A549 (cell line): ENCODE measurements at regions of chr1 and their contacts with region 1.

Region 1: GRCh38 chr1:75203415-75204277 is 69.5 kb downstream of the LHX8 start:
- DNase-seq: peak; percentile 18 to 61
- ATAC-seq: peak; percentile 87 to 92
- H3K4me3 ChIP-seq: no peak overlapping the region
- H3K27ac ChIP-seq: no peak overlapping the region
- H3K4me1 ChIP-seq: no peaks in the 10 kb centered on the region
- CTCF ChIP-seq: peak; percentile 76
- EP300 ChIP-seq: no peak
- POLR2A ChIP-seq: no peak
- RAD21 ChIP-seq: peak; percentile 79 to 82

Region 2: GRCh38 chr1:74771913-74772515 is 431.6 kb before region 1 on chr1:
- CTCF ChIA-PET with region 1: interaction called, 39 read pairs
- POLR2A ChIA-PET with region 1: no interaction called
- DNase-seq: peak; percentile 1 to 45
- ATAC-seq: peak; percentile 56 to 80; a peak in 3 of 6 replicates
- H3K4me3 ChIP-seq: no peak overlapping the region
- H3K27ac ChIP-seq: no peak overlapping the region
- H3K4me1 ChIP-seq: 0 out of 3 replicates have a peak, but pooled peaks cover 3% of the 10 kb centered on the region
- CTCF ChIP-seq: peak; percentile 66
- EP300 ChIP-seq: no peak
- POLR2A ChIP-seq: no peak
- RAD21 ChIP-seq: peak; percentile 65 to 75

Region 3: DNA sequence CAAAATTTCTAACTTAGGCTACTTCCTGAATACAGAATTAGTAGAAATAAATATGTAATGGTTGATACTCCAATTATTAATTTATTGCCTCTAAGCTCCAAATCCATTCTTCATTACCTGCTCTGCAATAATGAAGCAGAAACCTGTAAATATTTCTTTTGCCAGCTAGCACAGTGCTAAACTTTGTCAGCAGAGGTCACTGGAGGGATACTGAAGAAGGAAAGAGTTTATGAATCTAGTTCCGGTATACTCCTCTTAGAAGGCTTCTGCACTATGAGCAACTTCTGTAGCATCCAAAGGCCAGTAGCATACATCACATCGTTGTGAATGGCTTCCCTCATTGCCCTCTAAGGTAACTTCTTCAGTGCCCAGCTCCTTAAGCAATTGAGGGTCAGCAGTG is 150.4 kb before region 1 on chr1:
- CTCF ChIA-PET with region 1: interaction called, 12 read pairs
- POLR2A ChIA-PET with region 1: no interaction called
- DNase-seq: peak in 1 of 2 experiments; percentile 34
- ATAC-seq: peak in 1 of 2 experiments; percentile 83; a peak in 3 of 6 replicates
- H3K4me3 ChIP-seq: no peak overlapping the region
- H3K27ac ChIP-seq: no peak overlapping the region
- H3K4me1 ChIP-seq: no peaks in the 10 kb centered on the region
- CTCF ChIP-seq: peak; percentile 36
- EP300 ChIP-seq: no peak
- POLR2A ChIP-seq: no peak
- RAD21 ChIP-seq: peak; percentile 47 to 54; a peak in 3 of 5 replicates